Left cardiac atrium (tissue), 4 donors: ENCODE measurements at regions of chr6 and their contacts with region 1.

Region 1: GRCh38 chr6:17086469-17086868 is 15.4 kb upstream of the STMND1 start:
- DNase-seq: peak; percentile 31
- ATAC-seq: peak; percentile 85 to 86

Region 2: GRCh38 chr6:16964553-16965501 is 121.6 kb before region 1 on chr6:
- intact Hi-C with region 1: loop called in 1 of 2 experiments (anchors 5 kb)
- DNase-seq: peak; percentile 70
- ATAC-seq: peak; percentile 90 to 92